CD4-positive, alpha-beta memory T cell (primary cell): ENCODE measurements at regions of chr2 and their contacts with region 1.

Region 1: GRCh38 chr2:163278166-163278565 is 439.6 kb upstream of the KCNH7 start:
- DNase-seq: no peak
- H3K4me3 ChIP-seq: no peak overlapping the region
- H3K4me3 Mint-ChIP-seq: no peak overlapping the region
- H3K27ac ChIP-seq: no peak overlapping the region
- H3K27ac Mint-ChIP-seq: no peak overlapping the region
- H3K4me1 ChIP-seq: no peaks in the 10 kb centered on the region
- H3K4me1 Mint-ChIP-seq: no peaks in the 10 kb centered on the region
- H3K27me3 ChIP-seq: no peaks in the 10 kb centered on the region
- H3K27me3 Mint-ChIP-seq: no peaks in the 10 kb centered on the region

Region 2: DNA sequence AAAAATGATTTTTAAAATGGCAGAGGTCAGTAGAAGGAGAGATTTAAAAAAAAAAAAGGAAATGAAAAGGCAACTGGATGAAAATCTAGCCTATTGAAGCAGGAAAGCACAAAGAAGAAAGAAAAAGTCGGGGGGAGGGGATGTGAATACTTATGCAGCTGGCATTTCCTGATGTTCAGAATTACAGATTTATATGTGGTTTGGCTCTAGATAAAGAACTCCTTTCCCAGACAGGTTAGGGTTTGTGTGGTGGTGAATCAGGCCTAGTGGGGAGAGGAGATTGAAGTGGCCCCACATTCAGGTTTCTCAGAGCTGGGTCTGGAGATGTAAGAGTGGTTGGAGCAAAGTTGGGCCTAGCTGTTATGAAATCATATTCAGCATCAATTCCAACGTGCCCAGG is 63.3 kb after region 1 on chr2:
- CTCF ChIA-PET with region 1: no interaction called
- POLR2A ChIA-PET with region 1: no interaction called
- intact Hi-C with region 1: loop called (anchors 2 kb)
- DNase-seq: no peak
- H3K4me3 ChIP-seq: no peak overlapping the region
- H3K4me3 Mint-ChIP-seq: no peak overlapping the region
- H3K27ac ChIP-seq: no peak overlapping the region
- H3K27ac Mint-ChIP-seq: peak overlapping the region in 1 of 7 donors; percentile 19
- H3K4me1 ChIP-seq: no peaks in the 10 kb centered on the region
- H3K4me1 Mint-ChIP-seq: peaks cover 0 to 2% (median 0%) of the 10 kb centered on the region in 4 donors
- H3K27me3 ChIP-seq: no peaks in the 10 kb centered on the region
- H3K27me3 Mint-ChIP-seq: no peaks in the 10 kb centered on the region